Uterus (tissue), 4 donors: ENCODE measurements at regions of chr14 and their contacts with region 1.

Region 1: GRCh38 chr14:81453166-81453766 is 53.1 kb upstream of the STON2 start:
- DNase-seq: peak in 1 of 2 donors; percentile 41
- H3K4me3 ChIP-seq: no peak overlapping the region
- H3K27ac ChIP-seq: no peak overlapping the region
- H3K4me1 ChIP-seq: no peaks in the 10 kb centered on the region
- H3K27me3 ChIP-seq: no peaks in the 10 kb centered on the region
- CTCF ChIP-seq: peak; percentile 75 to 80 (median 76)
- POLR2A ChIP-seq: no peak

Region 2: DNA sequence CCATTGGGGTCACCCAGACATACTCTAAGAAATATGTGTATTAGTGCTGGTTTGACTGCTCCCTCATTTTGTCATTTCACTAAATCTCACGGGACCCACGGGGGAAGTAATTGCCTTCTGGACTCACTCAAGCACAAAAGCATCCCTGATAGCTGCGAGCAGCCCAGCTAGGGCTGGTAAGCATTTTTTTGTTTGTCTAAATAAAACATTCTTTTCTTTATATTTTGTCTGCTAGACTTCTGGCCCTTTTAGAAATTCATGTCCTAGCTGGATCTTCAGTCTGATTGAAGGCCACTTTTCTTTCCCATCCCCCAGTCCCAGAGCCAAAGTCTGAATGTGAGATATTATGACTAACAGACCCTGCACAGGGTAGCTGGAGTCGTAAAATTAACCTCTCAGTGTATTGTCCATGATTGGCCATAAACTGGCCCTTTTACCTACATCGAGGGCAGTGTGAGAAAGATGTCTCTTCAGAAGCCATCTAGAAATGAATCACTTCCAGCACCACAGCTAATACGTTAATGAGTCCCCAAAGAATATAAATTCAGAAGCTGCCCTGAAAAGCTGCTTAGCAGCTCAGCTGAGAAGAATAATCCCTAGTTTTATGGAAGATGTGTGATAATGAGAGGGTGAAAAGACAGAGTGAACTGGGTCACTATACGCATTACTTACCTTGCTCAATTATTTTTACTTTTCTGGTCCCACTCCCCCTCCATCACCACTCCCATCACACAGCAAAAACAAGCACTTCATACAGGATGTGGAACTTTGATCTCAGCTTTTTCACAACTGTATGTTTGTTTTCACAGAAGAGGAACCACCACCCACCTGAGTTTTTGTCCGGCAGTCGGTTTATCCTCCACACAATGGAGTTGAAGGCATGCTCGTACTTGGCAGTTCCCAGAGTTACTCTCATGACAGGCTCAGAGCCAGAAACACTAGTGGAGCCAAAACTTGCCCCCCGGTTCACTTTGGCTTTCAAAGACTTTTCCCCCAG is 176.9 kb before region 1 on chr14:
- intact Hi-C with region 1: loop called (anchors 10 kb)
- DNase-seq: no peak
- H3K4me3 ChIP-seq: no peak overlapping the region
- H3K27ac ChIP-seq: no peak overlapping the region
- H3K4me1 ChIP-seq: no peaks in the 10 kb centered on the region
- H3K27me3 ChIP-seq: no peaks in the 10 kb centered on the region
- CTCF ChIP-seq: no peak
- POLR2A ChIP-seq: no peak

Region 3: DNA sequence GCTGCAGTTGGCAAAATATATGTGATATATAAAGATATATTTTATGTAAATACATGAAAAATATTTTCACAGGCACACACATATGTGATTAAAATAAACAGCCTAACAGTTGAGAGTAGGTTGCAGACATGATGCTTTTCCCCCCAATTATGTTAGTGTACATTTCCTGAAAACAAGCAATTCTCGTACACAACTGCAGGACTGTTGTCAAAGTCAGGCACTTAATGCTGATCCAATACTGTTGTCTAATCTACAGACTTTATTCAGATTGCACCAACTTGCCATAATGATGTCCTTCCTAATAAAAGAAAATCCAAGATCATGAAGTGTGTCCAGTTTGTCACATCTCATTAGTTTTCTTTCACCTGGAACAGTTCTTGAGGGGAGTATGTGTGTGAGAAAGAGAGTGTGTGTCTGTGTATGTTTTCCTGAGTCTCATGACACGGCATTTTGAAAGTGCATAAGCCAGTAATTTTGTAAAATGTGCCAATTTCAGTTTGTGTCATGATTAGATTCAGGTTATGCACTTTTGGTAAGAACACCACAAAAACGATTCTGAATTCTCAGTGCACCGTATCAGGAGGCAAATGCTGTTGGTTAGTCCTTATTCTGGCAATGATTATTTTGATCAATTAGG is 96.9 kb after region 1 on chr14:
- intact Hi-C with region 1: no loop called
- DNase-seq: no peak
- H3K4me3 ChIP-seq: no peak overlapping the region
- H3K27ac ChIP-seq: no peak overlapping the region
- H3K4me1 ChIP-seq: no peaks in the 10 kb centered on the region
- H3K27me3 ChIP-seq: no peaks in the 10 kb centered on the region
- CTCF ChIP-seq: no peak
- POLR2A ChIP-seq: no peak

Region 4: DNA sequence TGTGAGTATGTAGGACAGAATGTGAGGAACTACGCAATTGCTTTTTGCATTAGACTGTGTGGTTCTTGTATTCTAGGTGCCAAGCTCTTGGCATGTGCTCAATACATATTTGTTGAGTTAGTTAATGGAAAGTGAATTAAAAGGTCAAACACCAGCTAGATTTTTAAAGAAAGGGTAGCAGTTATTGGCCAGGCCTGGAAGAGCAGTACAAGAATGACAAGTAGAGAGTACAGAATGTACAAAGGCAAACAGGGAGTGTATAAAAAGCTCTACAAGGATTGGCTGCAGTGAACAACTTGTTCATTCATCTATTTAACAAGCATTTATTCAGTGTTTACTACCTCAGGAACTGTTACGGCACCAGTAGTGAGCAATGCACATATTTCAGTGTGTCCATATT is 934.4 kb after region 1 on chr14:
- intact Hi-C with region 1: no loop called
- DNase-seq: no peak
- H3K4me3 ChIP-seq: no peak overlapping the region
- H3K27ac ChIP-seq: no peak overlapping the region
- H3K4me1 ChIP-seq: no peaks in the 10 kb centered on the region
- H3K27me3 ChIP-seq: no peaks in the 10 kb centered on the region
- CTCF ChIP-seq: no peak
- POLR2A ChIP-seq: no peak